H1 (cell line): ENCODE measurements at regions of chr15 and their contacts with region 1.

Region 1: GRCh38 chr15:66163553-66163952 is 90.0 kb downstream of the MEGF11 start:
- DNase-seq: no peak
- H3K4me3 ChIP-seq: no peak overlapping the region
- H3K27ac ChIP-seq: no peak overlapping the region
- H3K4me1 ChIP-seq: peaks cover 0 to 3% (median 0%) of the 10 kb centered on the region in 4 experiments; a peak in 1 of 7 replicates
- H3K27me3 ChIP-seq: no peaks in the 10 kb centered on the region
- CTCF ChIP-seq: no peak
- EP300 ChIP-seq: no peak
- POLR2A ChIP-seq: no peak
- RAD21 ChIP-seq: no peak

Region 2: DNA sequence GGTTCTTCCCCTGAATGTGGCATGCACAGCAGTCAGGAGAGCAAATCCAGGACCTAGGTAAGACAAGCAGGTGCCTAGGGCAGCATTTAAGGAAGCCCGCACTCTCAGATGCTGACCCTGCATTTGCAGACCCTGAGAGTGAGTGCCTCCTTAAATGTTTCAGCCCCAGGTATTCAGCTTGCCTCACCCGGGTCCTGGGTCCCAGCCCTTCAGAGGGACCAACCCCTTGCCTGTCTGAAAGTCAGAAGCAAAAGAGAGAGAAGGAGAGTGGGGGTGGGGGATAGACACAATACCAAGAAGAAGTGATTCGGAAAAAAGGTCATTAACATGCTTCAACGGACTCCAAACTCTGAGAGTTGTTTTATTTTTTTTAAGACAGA is 15.0 kb after region 1 on chr15:
- CTCF ChIA-PET with region 1: interaction called, 21 read pairs
- POLR2A ChIA-PET with region 1: interaction called, 6 read pairs
- DNase-seq: peak in 1 of 2 experiments; percentile 33
- H3K4me3 ChIP-seq: peak overlapping the region in 1 of 4 experiments; percentile 25; a peak in 1 of 8 replicates
- H3K27ac ChIP-seq: no peak overlapping the region
- H3K4me1 ChIP-seq: peaks cover 14 to 39% (median 24%) of the 10 kb centered on the region in 4 experiments
- H3K27me3 ChIP-seq: no peaks in the 10 kb centered on the region
- CTCF ChIP-seq: no peak
- EP300 ChIP-seq: no peak
- POLR2A ChIP-seq: no peak
- RAD21 ChIP-seq: no peak

Region 3: DNA sequence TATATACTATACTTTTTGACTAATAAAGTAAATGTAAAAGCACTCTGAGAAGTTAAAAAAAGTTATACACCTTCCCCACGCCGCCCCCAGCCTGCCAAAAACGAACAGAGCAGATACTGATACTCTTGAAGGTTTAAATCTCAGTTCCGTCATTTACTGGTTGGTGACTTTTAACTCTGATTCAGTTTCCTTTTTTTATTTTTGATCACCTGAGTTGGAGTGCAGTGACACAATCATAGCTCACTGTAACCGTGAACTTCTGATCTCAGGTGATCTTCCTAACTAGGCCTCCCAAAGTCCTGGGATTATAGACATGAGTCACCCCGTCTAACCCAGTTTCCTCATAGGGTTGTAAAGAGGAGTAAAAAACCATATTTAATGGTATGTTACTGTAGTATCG is 196.2 kb after region 1 on chr15:
- CTCF ChIA-PET with region 1: no interaction called
- POLR2A ChIA-PET with region 1: no interaction called
- DNase-seq: no peak
- H3K4me3 ChIP-seq: no peak overlapping the region
- H3K27ac ChIP-seq: no peak overlapping the region
- H3K4me1 ChIP-seq: peaks cover 0 to 7% (median 3%) of the 10 kb centered on the region in 4 experiments; a peak in 5 of 7 replicates
- H3K27me3 ChIP-seq: no peaks in the 10 kb centered on the region
- CTCF ChIP-seq: no peak
- EP300 ChIP-seq: no peak
- POLR2A ChIP-seq: no peak
- RAD21 ChIP-seq: no peak